CD14-positive monocyte (primary cell): ENCODE measurements at regions of chr14 and their contacts with region 1.

Region 1: DNA sequence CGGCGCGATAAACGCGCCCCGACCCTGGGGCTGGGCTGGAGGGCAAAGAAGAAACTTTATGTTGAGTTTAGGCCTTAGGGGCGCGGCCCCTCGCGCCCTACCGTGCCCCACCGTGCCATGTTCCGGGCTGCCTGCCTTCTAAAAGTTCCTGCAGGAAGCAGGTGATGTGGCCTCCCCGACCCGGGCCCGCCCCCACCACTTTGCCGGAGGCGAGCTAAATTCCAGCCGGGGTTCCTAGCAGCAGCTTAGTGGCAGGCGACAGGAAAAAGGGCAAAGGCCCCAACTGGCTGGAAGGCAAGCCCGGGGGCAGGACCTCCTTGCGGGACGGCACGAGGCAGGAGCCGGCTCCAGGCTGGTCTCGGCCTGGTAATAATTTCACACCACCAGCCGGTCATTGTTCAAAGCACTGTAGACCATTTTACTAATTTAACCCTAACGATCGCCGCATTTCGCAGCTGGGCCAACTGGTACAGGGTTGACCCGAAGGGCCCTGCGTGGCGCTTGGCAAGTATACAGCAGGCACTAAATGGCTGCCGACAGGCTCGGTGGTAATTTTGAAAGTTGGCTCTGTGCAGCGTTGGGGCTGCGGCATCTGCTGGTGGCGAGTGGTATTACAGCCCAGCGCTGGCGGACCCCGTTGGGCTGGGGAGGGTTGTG is 895 bp upstream of the CCDC88C start:
- DNase-seq: peak; percentile 54 to 77 (median 76)
- H3K4me3 ChIP-seq: peak overlapping the region; percentile 40 to 75 (median 44)
- H3K4me3 Mint-ChIP-seq: peak overlapping the region; percentile 85 to 93
- H3K27ac ChIP-seq: peak overlapping the region; percentile 24 to 75
- H3K27ac Mint-ChIP-seq: peak overlapping the region in 6 of 7 donors; percentile 43 to 83 (median 62)
- H3K4me1 ChIP-seq: peaks cover 58 to 64% of the 10 kb centered on the region in 2 donors
- H3K4me1 Mint-ChIP-seq: peaks cover 59% of the 10 kb centered on the region
- H3K27me3 ChIP-seq: no peaks in the 10 kb centered on the region
- H3K27me3 Mint-ChIP-seq: peaks cover 0 to 3% (median 0%) of the 10 kb centered on the region in 3 donors
- CTCF ChIP-seq: peak; percentile 99

Region 2: GRCh38 chr14:91249841-91250616 is 168.5 kb before region 1 on chr14:
- intact Hi-C with region 1: loop called in 1 of 2 experiments (anchors 10 kb)
- DNase-seq: peak; percentile 71 to 82 (median 74)
- H3K4me3 ChIP-seq: peak overlapping the region in 1 of 3 experiments; percentile 59
- H3K4me3 Mint-ChIP-seq: peak overlapping the region; percentile 39 to 82
- H3K27ac ChIP-seq: peak overlapping the region; percentile 35 to 91
- H3K27ac Mint-ChIP-seq: peak overlapping the region; percentile 81 to 93 (median 85)
- H3K4me1 ChIP-seq: peaks cover 31 to 39% of the 10 kb centered on the region in 2 donors
- H3K4me1 Mint-ChIP-seq: peaks cover 35% of the 10 kb centered on the region
- H3K27me3 ChIP-seq: peaks cover 4 to 22% of the 10 kb centered on the region in 2 donors
- H3K27me3 Mint-ChIP-seq: peaks cover 25 to 29% (median 25%) of the 10 kb centered on the region in 3 donors
- CTCF ChIP-seq: no peak

Region 3: GRCh38 chr14:91323671-91324605 is 94.6 kb before region 1 on chr14:
- intact Hi-C with region 1: loop called (anchors 1 kb)
- DNase-seq: peak; percentile 82 to 88 (median 86)
- H3K4me3 ChIP-seq: peak overlapping the region; percentile 39 to 73 (median 42)
- H3K4me3 Mint-ChIP-seq: peak overlapping the region; percentile 81 to 92
- H3K27ac ChIP-seq: peak overlapping the region; percentile 92 to 98
- H3K27ac Mint-ChIP-seq: peak overlapping the region; percentile 95 to 99 (median 99)
- H3K4me1 ChIP-seq: peaks cover 26 to 31% of the 10 kb centered on the region in 2 donors
- H3K4me1 Mint-ChIP-seq: peaks cover 44% of the 10 kb centered on the region
- H3K27me3 ChIP-seq: no peaks in the 10 kb centered on the region
- H3K27me3 Mint-ChIP-seq: peaks cover 0 to 1% (median 0%) of the 10 kb centered on the region in 3 donors
- CTCF ChIP-seq: peak; percentile 97

Region 4: GRCh38 chr14:91363776-91364523 is 54.6 kb before region 1 on chr14:
- intact Hi-C with region 1: loop called (anchors 1 to 5 kb)
- DNase-seq: peak; percentile 94 to 97 (median 94)
- H3K4me3 ChIP-seq: peak overlapping the region in 1 of 3 experiments; percentile 38
- H3K4me3 Mint-ChIP-seq: peak overlapping the region in 1 of 2 donors; percentile 76
- H3K27ac ChIP-seq: peak overlapping the region; percentile 96 to 97
- H3K27ac Mint-ChIP-seq: peak overlapping the region; percentile 94 to 99 (median 96)
- H3K4me1 ChIP-seq: peaks cover 98 to 100% of the 10 kb centered on the region in 2 donors
- H3K4me1 Mint-ChIP-seq: peaks cover 97% of the 10 kb centered on the region
- H3K27me3 ChIP-seq: no peaks in the 10 kb centered on the region
- H3K27me3 Mint-ChIP-seq: no peaks in the 10 kb centered on the region
- CTCF ChIP-seq: no peak

Region 5: GRCh38 chr14:91396959-91397815 is 21.3 kb before region 1 on chr14:
- intact Hi-C with region 1: loop called in 1 of 2 experiments (anchors 2 kb)
- DNase-seq: peak in 2 of 3 donors; percentile 44 to 49
- H3K4me3 ChIP-seq: peak overlapping the region; percentile 16 to 67 (median 24)
- H3K4me3 Mint-ChIP-seq: peak overlapping the region; percentile 75 to 92
- H3K27ac ChIP-seq: peak overlapping the region; percentile 83 to 84
- H3K27ac Mint-ChIP-seq: peak overlapping the region; percentile 88 to 96 (median 95)
- H3K4me1 ChIP-seq: peaks cover 93 to 94% of the 10 kb centered on the region in 2 donors
- H3K4me1 Mint-ChIP-seq: peaks cover 95% of the 10 kb centered on the region
- H3K27me3 ChIP-seq: no peaks in the 10 kb centered on the region
- H3K27me3 Mint-ChIP-seq: peaks cover 0 to 2% (median 1%) of the 10 kb centered on the region in 3 donors
- CTCF ChIP-seq: no peak